Caco-2 (cell line): ENCODE measurements at regions of chr22 and their contacts with region 1.

Region 1: GRCh38 chr22:28424427-28425080 is 255.1 kb downstream of the TTC28 start:
- DNase-seq: peak in 1 of 2 experiments; percentile 38
- H3K4me3 ChIP-seq: no peak overlapping the region
- H3K4me3 Mint-ChIP-seq: no peak overlapping the region
- H3K27ac Mint-ChIP-seq: no peak overlapping the region
- H3K4me1 ChIP-seq: peaks cover 35% of the 10 kb centered on the region
- H3K4me1 Mint-ChIP-seq: peaks cover 20% of the 10 kb centered on the region
- H3K27me3 ChIP-seq: no peaks in the 10 kb centered on the region
- H3K27me3 Mint-ChIP-seq: no peaks in the 10 kb centered on the region
- CTCF ChIP-seq: no peak

Region 2: DNA sequence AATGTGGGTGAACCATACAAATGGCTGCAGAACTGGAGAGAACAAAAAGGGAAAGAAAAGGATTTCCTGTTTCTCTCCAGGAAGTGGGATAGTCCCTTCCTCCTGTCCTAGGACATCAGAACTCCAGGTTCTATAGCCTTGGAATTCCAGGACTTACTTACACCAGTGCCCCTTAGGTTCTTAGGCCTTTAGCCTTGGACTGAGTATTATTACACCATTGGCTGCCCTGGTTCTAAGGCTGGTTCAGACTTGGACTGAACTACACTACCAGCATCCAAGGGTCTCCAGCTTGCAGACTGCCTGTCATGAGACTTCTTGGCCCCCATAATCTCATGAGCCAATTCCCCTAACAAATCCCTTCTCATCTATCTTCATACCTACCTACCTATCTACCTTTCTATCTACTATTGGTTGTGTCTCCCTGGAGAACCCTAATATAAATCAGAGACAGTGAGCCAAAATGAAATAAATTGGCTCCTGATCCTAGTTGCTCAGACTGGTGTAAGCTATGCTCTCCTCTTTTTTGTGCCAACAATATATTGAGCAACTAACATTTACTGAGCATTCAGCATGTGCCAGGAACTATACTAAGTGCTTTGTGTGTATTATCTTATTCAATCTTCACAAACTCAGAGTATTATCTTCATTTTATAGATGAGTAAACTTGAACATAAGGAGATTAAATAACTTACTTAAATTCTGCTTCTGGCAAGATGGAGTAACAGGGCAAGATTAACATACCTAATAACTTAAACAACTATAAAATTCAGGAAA is 48.6 kb before region 1 on chr22:
- CTCF ChIA-PET with region 1: no interaction called
- POLR2A ChIA-PET with region 1: no interaction called
- intact Hi-C with region 1: loop called (anchors 1 kb)
- DNase-seq: no peak
- H3K4me3 ChIP-seq: no peak overlapping the region
- H3K4me3 Mint-ChIP-seq: no peak overlapping the region
- H3K27ac Mint-ChIP-seq: no peak overlapping the region
- H3K4me1 ChIP-seq: 0 out of 2 replicates have a peak, but pooled peaks cover 2% of the 10 kb centered on the region
- H3K4me1 Mint-ChIP-seq: no peaks in the 10 kb centered on the region
- H3K27me3 ChIP-seq: no peaks in the 10 kb centered on the region
- H3K27me3 Mint-ChIP-seq: peaks cover 9% of the 10 kb centered on the region
- CTCF ChIP-seq: no peak